Left ventricle myocardium inferior (tissue), 1 donor: ENCODE measurements at regions of chr4 and their contacts with region 1.

Region 1: DNA sequence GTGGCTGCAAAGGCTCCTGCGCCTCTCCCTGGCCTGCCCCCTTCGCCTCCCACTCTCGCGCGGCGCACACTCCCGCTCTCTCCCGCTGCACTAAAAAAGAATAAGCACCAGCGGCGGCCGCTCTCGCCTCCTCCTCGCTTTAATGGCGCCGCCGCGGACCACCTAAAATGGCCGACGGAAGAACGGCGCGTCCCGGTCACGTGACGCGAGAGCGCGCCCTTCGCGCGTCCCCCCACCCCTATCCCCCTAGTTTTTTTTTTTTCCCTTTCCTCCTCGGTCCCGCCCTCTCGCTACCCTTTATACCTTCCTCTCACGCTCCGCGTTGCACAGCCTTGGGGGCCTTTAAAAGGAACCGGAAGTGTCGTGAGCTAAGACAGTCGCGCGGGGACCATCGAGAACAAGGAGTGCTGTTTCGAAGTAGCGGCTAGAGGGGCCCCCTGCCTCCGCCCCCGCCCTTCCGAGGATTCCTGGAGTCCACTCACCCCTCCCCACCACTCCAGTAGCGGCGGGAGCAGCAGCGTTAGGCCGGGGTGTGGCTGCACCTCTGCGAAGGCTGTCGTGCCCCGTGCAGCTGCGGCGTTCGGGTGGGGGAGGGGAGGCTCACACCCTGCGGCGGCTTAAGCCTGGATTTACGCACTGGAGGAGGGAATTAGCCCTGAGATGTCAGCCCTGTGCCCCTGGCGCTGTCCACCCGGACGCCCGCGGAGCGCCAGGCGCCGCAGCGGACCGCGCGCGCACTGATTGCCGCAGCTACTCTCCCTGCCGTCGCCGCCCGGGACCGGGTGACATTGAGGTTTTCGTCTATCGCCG is at the start of gene HNRNPD:
- DNase-seq: peak; percentile 98
- H3K4me3 ChIP-seq: peak within 1 kb of the TSS; percentile 95
- H3K27ac ChIP-seq: peak within 1 kb of the TSS; percentile 99
- H3K4me1 ChIP-seq: peaks cover 67% of the 10 kb centered on the region
- H3K27me3 ChIP-seq: no peaks in the 10 kb centered on the region
- CTCF ChIP-seq: peak; percentile 21
- total RNA-seq, gene HNRNPD: 93.0 TPM

Region 2: DNA sequence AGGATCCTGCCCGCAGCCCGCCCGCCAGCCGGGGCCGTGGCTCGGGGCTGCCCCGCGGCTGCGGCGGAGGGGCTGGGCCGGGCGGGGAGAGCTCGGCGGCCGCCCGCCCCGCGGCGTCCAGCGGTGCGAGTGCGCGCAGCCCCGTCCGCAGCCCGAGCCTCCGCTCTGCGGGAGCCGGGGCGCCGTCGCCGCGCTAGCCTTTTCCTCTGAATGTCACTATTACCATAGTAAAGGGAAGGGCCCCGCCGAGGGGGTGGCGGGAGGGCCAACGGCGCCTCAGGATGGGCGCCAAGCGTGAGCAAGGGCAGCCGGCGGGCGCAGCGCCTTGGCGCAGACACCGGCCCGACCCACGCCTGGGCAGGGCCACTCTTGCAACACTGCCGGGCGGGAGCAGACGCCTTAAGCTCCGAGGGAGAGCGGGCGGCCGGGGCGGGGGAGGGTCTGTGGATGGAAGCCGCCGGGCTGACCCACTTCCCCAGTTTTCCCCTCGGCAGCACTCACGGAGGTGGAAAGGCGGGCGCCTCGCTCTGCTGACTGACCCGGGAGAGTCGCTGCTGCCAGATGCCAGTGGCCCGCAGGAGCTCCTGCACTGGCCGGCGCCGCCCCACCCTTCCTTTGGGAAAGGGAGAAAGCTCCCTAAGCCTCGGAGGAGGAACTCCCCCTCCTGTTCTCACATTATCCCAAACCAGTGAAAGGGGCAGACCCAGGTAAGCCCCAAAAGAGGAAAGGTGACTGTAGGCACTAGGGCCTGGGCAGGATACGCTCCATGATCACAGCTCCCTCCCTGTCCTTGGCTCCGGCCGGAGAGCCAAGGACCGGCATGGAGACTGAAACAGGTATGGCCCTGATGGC is 329.7 kb before region 1 on chr4:
- intact Hi-C with region 1: no loop called
- DNase-seq: peak; percentile 37
- H3K4me3 ChIP-seq: peak overlapping the region; percentile 65
- H3K27ac ChIP-seq: no peak overlapping the region
- H3K4me1 ChIP-seq: peaks cover 14% of the 10 kb centered on the region
- H3K27me3 ChIP-seq: peaks cover 95% of the 10 kb centered on the region
- CTCF ChIP-seq: no peak

Region 3: DNA sequence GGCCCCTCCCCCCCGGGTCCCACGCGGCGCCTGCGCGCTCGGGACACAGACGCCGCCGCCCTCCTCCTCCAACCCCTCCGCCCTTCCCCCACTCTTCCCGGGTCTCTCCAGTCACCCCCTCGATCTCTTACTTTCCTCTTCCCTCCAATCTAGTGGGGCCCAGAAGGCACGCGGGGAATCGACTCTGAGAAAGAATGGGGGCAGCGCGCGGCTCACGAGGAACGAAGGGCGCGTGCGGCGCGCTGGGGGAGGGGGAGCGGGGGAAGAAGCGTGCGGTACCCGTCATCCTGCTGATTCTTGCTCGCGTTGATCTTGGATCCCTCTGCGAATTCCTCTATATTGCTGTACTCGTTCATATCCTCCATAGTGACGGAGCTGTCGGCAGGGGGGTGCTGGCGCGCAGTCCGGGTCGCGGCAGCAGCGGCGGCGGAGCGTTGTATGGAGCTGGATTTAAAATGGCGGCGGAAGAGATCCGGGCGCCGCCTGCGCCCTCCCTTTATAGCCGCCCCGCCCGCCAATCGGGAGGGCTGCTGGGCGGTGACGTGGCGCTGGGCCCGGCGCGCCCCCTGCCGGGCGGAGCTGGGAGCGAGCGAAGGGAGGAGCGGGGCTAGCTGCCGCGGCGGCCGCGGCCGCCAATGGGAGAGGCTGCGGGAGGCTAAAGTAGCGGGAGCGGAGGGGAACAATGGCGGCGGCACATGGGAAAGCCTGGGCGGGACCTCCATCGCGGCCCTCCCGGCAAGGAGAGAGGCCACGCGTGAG is 55.1 kb after region 1 on chr4:
- intact Hi-C with region 1: loop called (anchors 5 kb)
- DNase-seq: peak; percentile 94
- H3K4me3 ChIP-seq: peak overlapping the region; percentile 94
- H3K27ac ChIP-seq: peak overlapping the region; percentile 98
- H3K4me1 ChIP-seq: peaks cover 68% of the 10 kb centered on the region
- H3K27me3 ChIP-seq: no peaks in the 10 kb centered on the region
- CTCF ChIP-seq: peak; percentile 97